ENCODE measurements at regions of chr6 and their contacts with region 1.

Region 1: DNA sequence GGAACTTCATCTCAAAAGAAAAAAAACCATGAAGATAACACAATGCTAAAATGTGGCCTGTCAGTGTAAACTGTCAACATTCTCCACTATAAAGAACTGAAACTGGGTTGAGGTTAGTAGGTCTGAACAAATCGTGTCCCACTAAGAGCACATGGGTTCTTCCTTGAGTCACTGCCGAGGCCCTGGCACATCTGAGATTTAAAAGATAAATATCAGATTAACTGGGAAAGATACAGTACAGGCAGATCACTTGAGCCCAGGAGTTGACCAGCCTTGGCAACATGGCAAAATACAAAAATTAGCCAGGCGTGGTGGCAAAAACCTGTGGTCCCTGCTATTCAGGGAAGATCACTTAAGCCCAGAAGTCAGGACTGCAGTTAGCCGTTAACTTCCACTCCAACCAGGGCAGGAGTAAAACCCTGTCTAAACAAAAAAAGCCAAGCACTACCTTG is 5.6 kb downstream of the EEF1A1 start:
- DNase-seq: no peak
- ATAC-seq: no peak
- H3K4me3 Mint-ChIP-seq: peak overlapping the region; percentile 27
- H3K27ac Mint-ChIP-seq: peak overlapping the region; percentile 35
- H3K4me1 Mint-ChIP-seq: peaks cover 42% of the 10 kb centered on the region
- H3K27me3 Mint-ChIP-seq: no peaks in the 10 kb centered on the region

Region 2: DNA sequence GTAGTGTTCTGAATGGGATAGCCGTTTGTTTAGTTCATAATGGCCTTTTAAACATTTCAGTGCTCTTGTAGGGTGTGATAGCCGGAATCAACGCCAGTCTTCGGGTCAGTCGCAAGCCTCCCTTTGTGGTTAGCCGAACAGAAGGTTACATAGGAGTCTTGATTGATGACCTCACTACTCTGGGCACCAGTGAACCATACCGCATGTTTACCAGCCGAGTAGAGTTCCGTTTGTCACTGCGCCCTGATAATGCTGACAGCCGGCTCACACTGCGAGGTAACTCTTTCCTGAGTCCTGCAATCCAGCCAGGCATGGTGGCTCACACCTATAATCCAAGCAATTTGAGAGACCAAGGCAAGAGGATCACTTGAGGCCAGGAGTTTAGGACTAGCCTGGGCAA is 33.3 kb before region 1 on chr6:
- POLR2A ChIA-PET with region 1: no interaction called
- DNase-seq: no peak
- ATAC-seq: no peak
- H3K4me3 Mint-ChIP-seq: no peak overlapping the region
- H3K27ac Mint-ChIP-seq: no peak overlapping the region
- H3K4me1 Mint-ChIP-seq: no peaks in the 10 kb centered on the region
- H3K27me3 Mint-ChIP-seq: no peaks in the 10 kb centered on the region

Region 3: GRCh38 chr6:73585566-73586415 is 70.6 kb after region 1 on chr6:
- POLR2A ChIA-PET with region 1: interaction called, 145 read pairs
- DNase-seq: peak; percentile 40
- ATAC-seq: peak; percentile 85
- H3K4me3 Mint-ChIP-seq: peak overlapping the region; percentile 90
- H3K27ac Mint-ChIP-seq: peak overlapping the region; percentile 99
- H3K4me1 Mint-ChIP-seq: peaks cover 27% of the 10 kb centered on the region
- H3K27me3 Mint-ChIP-seq: no peaks in the 10 kb centered on the region

Region 4: DNA sequence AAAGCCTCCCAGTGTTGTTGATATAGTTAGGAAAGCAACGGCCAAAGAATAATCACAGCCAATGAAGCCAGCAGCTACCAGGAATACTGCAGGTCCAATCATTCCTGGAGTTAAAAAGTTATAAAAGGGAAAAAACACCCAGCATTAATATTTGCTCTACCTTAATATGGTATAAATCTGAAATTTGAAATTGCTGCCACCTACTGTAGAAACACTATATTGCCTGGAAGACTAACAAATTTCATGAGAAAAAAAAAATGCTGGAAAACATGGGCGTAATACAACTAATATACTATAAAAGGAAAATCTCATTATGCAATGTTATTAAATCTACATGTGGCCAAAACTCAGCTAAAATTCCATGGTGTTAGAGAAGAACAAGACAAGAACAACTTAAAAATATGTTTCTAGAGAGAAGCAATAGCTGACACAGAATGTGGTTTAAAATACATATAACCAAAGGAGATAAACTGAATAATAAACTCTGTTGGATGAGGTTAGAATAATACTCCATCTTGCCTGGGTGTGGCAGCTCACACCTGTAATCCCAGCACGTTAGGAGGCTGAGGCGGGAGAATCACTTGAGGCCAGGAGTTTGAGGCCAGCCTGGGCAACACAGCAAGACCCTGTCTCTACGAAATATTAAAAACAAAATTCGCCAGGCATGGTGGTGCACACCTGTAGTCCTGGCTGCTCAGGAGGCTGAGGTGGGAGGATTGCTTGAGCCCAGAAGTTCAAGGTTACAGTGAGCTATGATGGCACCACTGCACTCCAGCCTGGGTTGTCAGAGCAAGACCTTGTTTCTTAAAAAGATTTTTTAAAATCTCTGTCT is 95.4 kb after region 1 on chr6:
- POLR2A ChIA-PET with region 1: interaction called, 24 read pairs
- DNase-seq: no peak
- ATAC-seq: no peak
- H3K4me3 Mint-ChIP-seq: no peak overlapping the region
- H3K27ac Mint-ChIP-seq: no peak overlapping the region
- H3K4me1 Mint-ChIP-seq: peaks cover 2% of the 10 kb centered on the region
- H3K27me3 Mint-ChIP-seq: no peaks in the 10 kb centered on the region

Region 5: GRCh38 chr6:73653571-73654424 is 138.6 kb after region 1 on chr6 and contains the start of gene SLC17A5:
- POLR2A ChIA-PET with region 1: interaction called, 72 read pairs
- DNase-seq: peak; percentile 90
- ATAC-seq: peak; percentile 88
- H3K4me3 Mint-ChIP-seq: peak within 1 kb of the TSS; percentile 97
- H3K27ac Mint-ChIP-seq: peak within 1 kb of the TSS; percentile 97
- H3K4me1 Mint-ChIP-seq: peaks cover 21% of the 10 kb centered on the region
- H3K27me3 Mint-ChIP-seq: no peaks in the 10 kb centered on the region
- total RNA-seq, gene SLC17A5: 9.2 to 9.3 TPM

Measured in activated naive CD8-positive, alpha-beta T cell treated with anti-CD3 and anti-CD28 coated beads, Interleukin-2, amount 10 ng/mL, durations not matched to agents 7 days and 5 days (primary cell).